GM13976 (cell line): ENCODE measurements at regions of chr22 and their contacts with region 1.

Region 1: GRCh38 chr22:33302049-33302545 is 243.9 kb upstream of the SYN3 start:
- DNase-seq: peak; percentile 82
- CTCF ChIP-seq: peak; percentile 97

Region 2: DNA sequence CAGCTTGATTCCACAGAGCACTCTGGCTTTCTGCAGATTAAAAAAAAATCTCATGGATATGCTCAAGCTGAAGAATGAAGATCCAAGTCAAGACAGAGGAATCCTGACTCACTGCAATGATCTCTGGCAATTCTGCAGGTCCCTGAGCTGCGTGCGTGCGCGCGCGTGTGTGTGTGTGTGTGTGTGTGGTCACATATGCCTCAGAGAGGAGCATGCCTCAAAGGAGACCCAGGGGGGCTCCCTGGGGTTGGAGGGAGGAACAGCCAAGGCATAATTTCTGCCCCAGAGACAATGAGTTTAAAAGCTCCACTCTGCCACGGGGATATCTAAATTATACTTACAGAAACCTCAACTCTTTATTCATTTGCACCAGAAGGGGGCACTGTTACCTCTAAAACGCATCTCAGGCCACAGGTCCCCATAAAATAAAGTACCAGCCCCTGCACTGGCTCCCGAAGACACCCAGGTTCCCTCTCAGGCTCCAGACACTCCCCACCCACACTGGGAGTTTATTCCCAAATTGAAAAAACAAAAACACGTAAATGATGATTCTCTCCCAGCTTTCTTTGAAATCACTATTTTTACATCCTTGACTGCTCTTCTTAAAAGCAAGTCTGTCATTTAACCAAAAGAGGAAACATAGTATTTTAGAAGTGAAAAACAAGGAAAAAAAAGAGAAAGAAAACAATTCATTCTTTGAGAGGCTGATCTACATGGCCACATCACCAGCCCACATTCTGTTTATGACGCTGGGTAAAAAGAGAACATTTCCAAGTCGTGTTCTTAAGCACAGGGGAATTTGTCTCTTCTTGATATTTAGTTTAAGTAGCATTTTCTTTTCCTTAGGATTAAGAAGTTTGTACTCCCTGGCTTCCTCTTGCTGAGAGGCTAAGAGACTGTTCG is 217.2 kb after region 1 on chr22:
- in situ Hi-C with region 1: loop called (anchors 25 kb)
- DNase-seq: peak; percentile 83
- CTCF ChIP-seq: peak; percentile 36

Region 3: DNA sequence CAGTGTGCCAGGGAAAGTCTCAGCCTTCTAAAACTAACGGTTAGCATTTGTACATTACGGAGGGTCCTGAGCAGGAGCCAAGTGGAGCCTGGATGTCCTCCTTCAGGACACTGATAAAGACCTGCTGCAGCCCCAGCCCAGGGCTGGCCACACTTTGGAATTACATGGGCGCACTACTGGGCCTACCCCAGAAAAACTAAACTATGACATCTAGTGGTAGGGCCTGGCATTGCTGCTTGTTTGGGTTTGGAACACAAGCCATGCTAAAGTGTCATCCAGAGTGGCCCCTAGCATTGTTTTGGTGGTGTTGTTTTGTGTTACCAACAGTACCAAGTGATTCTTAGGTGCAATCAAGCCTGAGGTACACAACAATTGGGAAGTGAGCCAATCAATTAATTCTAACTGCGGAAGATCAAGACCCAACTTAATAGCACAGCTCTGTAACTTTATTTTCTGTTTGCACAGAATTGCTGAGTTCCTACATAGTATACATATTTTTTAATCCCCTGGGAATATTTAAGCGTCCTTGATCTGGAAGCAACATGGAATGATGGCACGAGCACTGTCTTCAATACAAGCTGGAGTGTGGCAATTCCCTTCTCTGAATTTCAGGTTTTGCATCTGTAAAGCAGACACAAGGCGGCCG is 277.5 kb after region 1 on chr22:
- in situ Hi-C with region 1: loop called (anchors 10 kb)
- DNase-seq: peak; percentile 60
- CTCF ChIP-seq: peak; percentile 82

Region 4: GRCh38 chr22:34111210-34111824 is 809.2 kb after region 1 on chr22:
- in situ Hi-C with region 1: loop called (anchors 25 kb)
- DNase-seq: peak; percentile 55
- CTCF ChIP-seq: peak; percentile 55